ENCODE measurements at regions of chr10 and their contacts with region 1.

Region 1: DNA sequence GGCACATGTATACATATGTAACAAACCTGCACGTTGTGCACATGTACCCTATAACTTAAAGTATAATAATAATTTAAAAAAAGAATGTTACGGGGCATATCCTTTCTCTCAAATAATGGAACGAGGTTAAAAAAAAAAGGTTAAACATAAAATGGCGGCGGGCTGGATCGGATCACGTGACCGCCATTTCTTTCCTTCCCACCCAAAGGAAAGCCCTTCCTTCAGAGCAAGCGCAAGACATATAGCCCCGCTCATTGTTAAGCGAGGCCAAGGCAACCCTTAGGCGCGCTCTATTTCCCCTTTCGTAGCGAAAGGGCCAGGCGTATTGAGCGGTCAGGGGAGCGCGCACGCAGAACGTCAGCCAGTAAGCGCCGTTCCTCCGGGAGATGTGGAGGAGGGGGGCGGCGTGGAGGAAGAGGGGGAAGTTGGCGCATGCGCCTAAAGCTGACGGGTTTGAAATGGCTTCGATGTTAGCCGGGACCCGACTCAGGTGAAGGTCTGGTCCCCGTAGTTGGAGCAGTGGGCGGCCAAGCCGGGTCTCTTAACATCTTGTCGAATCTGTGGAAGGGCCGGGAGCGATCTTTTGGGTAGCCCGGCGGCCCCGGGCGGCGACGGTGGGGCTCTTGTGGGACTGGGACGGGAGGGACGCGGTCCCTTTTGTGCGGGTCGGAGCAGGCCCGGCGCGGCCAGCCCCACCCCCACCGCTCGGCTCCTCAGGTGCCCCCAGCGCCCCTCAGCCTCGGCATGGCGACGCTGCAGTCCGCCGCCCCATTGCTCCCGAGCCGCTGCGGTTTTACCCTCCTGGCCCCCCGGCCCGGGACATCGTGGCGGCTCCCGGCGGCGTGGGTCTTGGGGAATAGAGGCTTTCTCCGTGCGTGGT is at the start of gene CCAR1:
- DNase-seq: peak; percentile 99
- H3K4me3 ChIP-seq: peak within 1 kb of the TSS; percentile 55 to 97 (median 78)
- H3K27ac ChIP-seq: peak within 1 kb of the TSS; percentile 85
- H3K4me1 ChIP-seq: peaks cover 10% of the 10 kb centered on the region
- H3K27me3 ChIP-seq: no peaks in the 10 kb centered on the region
- CTCF ChIP-seq: no peak
- POLR2A ChIP-seq: peak; percentile 91
- total RNA-seq, gene CCAR1: 83.3 and 92.9 TPM in 2 replicates

Region 2: GRCh38 chr10:68331455-68332258 is 389.4 kb before region 1 on chr10 and contains the start of gene HNRNPH3:
- CTCF ChIA-PET with region 1: no interaction called
- POLR2A ChIA-PET with region 1: no interaction called
- dilution Hi-C with region 1: no loop called
- intact Hi-C with region 1: loop called (anchors 1 kb)
- DNase-seq: peak; percentile 98
- H3K4me3 ChIP-seq: peak within 1 kb of the TSS; percentile 95 to 100 (median 99)
- H3K27ac ChIP-seq: peak within 1 kb of the TSS; percentile 91
- H3K4me1 ChIP-seq: peaks cover 15% of the 10 kb centered on the region
- H3K27me3 ChIP-seq: no peaks in the 10 kb centered on the region
- CTCF ChIP-seq: no peak
- POLR2A ChIP-seq: peak; percentile 98
- total RNA-seq, gene HNRNPH3: 146 and 151 TPM in 2 replicates

Region 3: DNA sequence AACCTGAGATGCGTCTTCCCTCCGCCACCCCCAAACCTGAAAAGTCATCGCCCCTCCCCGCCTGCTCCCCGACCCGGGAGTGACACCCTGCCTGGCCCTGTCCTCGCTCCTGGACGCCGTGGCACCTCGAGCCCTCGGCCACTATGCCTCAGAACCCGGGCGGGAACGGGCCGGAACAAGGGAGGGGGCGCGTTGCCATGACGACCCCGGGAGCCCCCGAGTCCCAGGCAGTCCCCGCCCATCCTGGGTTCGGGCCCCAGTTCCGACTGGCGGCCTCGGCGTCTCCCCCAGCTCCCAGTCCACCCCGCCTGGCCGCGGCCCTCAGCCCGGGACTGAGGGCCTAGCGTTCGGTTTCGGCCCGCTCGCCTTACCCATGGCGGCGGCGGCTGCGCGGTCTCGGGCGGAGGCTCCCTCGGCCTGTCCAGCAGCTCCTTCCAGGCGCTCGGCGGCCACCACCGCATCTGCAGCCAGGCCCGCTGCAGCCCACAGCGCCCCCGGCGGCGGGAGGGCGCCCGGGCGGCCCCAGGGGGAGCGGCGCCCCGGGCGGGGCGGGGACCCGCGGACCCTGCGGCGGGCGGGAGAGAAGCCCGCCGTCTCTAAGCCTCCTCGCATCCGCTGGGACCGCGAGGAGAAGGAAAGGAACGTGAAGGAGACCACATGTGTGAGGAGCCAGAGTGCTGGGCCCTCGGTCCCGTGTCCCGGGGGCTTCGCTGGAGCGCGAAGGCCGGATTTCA is 314.1 kb before region 1 on chr10 and contains the start of gene RUFY2:
- CTCF ChIA-PET with region 1: no interaction called
- POLR2A ChIA-PET with region 1: no interaction called
- dilution Hi-C with region 1: no loop called
- intact Hi-C with region 1: loop called (anchors 10 kb)
- DNase-seq: peak; percentile 79
- H3K4me3 ChIP-seq: peak within 1 kb of the TSS; percentile 67 to 93 (median 88)
- H3K27ac ChIP-seq: peak within 1 kb of the TSS; percentile 50
- H3K4me1 ChIP-seq: peaks cover 6% of the 10 kb centered on the region
- H3K27me3 ChIP-seq: no peaks in the 10 kb centered on the region
- CTCF ChIP-seq: peak; percentile 53 to 91
- POLR2A ChIP-seq: peak; percentile 45
- total RNA-seq, gene RUFY2: 24.2 and 26.1 TPM in 2 replicates

Region 4: DNA sequence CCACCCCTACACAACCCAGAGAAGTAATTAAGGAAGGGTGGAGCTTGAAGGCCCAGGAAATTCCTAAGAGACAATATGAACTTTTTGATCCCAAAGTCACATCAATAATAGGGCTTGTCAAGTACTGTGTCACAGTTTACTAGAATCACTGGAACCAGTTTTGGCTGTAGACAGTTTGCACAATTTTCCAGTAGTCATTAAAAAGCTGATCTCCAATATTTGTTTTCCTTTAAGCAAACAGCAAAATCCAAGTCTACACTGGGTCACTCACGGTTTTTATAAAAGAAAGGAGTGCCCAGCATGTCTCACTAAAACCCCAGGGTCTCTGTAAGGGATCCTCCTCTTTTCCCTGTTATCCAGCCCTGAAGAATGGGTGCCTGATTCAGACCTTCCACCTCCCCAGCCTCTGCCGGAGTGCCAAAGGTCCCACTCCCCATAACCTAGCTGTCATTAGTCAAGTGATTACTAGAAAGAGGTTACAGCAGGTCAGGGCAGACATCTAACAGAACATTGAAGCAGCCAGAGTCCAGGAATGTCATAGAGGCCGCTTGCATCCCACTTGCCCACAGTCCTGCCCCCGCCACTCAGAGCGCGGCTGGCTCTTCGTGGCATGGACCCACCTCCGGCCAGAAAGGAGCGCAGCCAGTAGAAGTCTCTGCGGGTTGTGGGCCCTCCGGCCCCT is 194.3 kb before region 1 on chr10:
- CTCF ChIA-PET with region 1: no interaction called
- POLR2A ChIA-PET with region 1: no interaction called
- dilution Hi-C with region 1: no loop called
- intact Hi-C with region 1: loop called (anchors 1 kb)
- DNase-seq: peak; percentile 3
- H3K4me3 ChIP-seq: peak overlapping the region; percentile 63 to 94 (median 77)
- H3K27ac ChIP-seq: peak overlapping the region; percentile 26
- H3K4me1 ChIP-seq: peaks cover 3% of the 10 kb centered on the region
- H3K27me3 ChIP-seq: no peaks in the 10 kb centered on the region
- CTCF ChIP-seq: no peak
- POLR2A ChIP-seq: no peak

Region 5: GRCh38 chr10:68550747-68551411 is 170.2 kb before region 1 on chr10:
- CTCF ChIA-PET with region 1: interaction called, 14 read pairs
- POLR2A ChIA-PET with region 1: no interaction called
- dilution Hi-C with region 1: no loop called
- intact Hi-C with region 1: loop called (anchors 1 kb)
- DNase-seq: peak; percentile 62
- H3K4me3 ChIP-seq: no peak overlapping the region
- H3K27ac ChIP-seq: no peak overlapping the region
- H3K4me1 ChIP-seq: no peaks in the 10 kb centered on the region
- H3K27me3 ChIP-seq: no peaks in the 10 kb centered on the region
- CTCF ChIP-seq: peak; percentile 70 to 75
- POLR2A ChIP-seq: no peak

Region 6: GRCh38 chr10:68600041-68600778 is 120.8 kb before region 1 on chr10:
- CTCF ChIA-PET with region 1: no interaction called
- POLR2A ChIA-PET with region 1: no interaction called
- dilution Hi-C with region 1: no loop called
- intact Hi-C with region 1: loop called (anchors 1 kb)
- DNase-seq: peak; percentile 86
- H3K4me3 ChIP-seq: peak overlapping the region; percentile 31 to 80 (median 70)
- H3K27ac ChIP-seq: peak overlapping the region; percentile 55
- H3K4me1 ChIP-seq: peaks cover 14% of the 10 kb centered on the region
- H3K27me3 ChIP-seq: no peaks in the 10 kb centered on the region
- CTCF ChIP-seq: no peak
- POLR2A ChIP-seq: peak; percentile 61

Measured in endothelial cell of umbilical vein (primary cell).